ENCODE measurements at regions of chr19 and their contacts with region 1.

Region 1: DNA sequence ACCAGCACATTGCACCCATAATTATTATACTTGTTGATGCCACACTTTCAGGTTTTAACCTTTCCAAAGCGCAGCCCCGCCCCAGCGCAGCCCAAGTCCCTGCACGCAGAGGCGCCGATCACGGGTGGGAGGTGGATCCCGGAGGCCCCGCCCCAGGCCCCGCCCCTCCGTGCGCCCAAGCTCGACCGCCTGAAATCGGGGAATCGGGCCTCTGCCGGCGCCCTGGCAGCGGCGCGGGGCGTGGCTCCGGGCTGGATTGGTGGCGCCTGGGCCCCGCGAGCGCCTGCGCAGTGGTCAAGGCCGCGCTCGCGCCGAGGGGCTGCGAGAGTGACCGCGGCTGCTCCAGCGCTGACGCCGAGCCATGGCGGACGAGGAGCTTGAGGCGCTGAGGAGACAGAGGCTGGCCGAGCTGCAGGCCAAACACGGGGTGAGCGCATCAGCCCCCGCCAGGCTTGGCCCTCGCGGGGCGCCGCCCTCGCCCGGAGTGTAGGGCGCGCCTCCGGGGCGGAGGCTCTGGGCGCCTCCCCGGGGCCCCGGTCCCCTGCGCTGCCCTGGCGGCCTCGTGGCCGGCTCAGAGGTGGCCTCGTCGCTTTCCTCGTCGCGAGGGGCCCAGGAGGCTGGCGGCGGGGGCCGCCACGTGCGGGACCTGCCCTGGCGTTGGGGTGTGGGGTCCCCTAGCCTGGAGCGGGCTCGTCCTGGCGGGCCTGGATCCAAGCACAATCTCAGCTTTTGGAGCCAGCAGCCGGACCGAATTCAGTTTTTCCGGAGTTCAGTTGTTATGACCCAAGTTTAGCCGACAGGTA is at the start of gene PDCD5:
- DNase-seq: peak; percentile 88 to 96 (median 93)
- ATAC-seq: peak; percentile 98
- H3K4me3 ChIP-seq: peak within 1 kb of the TSS; percentile 91
- H3K4me3 Mint-ChIP-seq: peak within 1 kb of the TSS; percentile 89 to 99 (median 94)
- H3K27ac ChIP-seq: peak within 1 kb of the TSS; percentile 77
- H3K27ac Mint-ChIP-seq: peak within 1 kb of the TSS; percentile 75 to 95 (median 90)
- H3K4me1 ChIP-seq: peaks cover 13 to 19% of the 10 kb centered on the region in 2 donors
- H3K4me1 Mint-ChIP-seq: peaks cover 10 to 46% (median 36%) of the 10 kb centered on the region in 7 donors
- H3K27me3 ChIP-seq: no peaks in the 10 kb centered on the region
- H3K27me3 Mint-ChIP-seq: peaks cover 0 to 20% (median 0%) of the 10 kb centered on the region in 5 donors
- total RNA-seq, gene PDCD5: 19.5 to 98.0 (median 51.2) TPM

Region 2: DNA sequence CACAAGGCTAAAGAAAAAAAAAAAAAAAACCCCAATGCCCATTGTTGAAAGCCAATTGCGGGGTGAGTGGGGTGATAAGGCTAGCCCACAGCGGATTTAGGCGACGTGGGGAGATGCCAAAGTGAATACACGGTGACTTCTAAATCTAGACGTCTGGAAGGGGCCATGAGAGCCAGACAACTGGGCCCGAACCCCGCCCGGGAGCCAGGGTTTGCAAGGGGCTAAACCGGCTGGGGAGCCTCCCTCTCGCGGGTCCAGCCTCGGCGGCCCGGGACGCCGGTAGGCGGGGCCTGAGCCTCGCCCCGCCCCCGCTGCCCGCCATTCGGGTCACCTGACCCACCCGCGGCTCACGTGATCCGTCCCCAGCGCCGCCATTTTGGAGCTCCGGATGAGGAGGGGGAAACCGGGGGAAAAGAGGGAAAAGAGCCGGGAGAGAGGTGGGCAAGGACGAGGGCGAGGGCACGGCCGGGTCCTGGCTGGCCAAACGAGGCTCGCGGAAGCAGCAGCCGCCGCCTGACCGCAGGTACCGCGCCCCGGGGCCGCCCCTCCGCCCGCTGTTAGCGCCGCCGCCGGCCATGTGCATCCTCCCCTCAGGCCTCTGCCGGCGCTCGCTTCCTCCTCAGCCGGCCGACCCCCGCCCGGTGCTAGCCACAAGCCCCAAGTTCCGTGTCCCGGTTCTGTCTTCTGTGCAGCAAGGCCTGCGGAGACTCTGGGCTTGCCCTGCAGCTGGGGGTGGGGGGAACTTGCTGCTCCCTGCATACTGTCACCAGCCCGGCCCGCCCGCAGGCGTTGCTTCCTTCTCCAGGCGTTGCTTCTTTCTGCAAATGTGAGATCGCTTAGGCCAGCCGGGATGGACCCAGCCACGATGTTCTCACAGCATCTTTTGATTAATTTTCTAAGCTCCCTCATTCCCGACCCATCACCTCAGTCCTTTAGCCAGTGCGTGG is 235.6 kb before region 1 on chr19 and contains the start of gene ZNF507:
- CTCF ChIA-PET with region 1: no interaction called
- POLR2A ChIA-PET with region 1: interaction called, 5 read pairs
- intact Hi-C with region 1: loop called (anchors 1 kb)
- DNase-seq: peak; percentile 69 to 90 (median 77)
- ATAC-seq: peak; percentile 93
- H3K4me3 ChIP-seq: peak within 1 kb of the TSS; percentile 71
- H3K4me3 Mint-ChIP-seq: peak within 1 kb of the TSS; percentile 95 to 99 (median 97)
- H3K27ac ChIP-seq: peak within 1 kb of the TSS; percentile 89
- H3K27ac Mint-ChIP-seq: peak within 1 kb of the TSS; percentile 88 to 99 (median 95)
- H3K4me1 ChIP-seq: peaks cover 27 to 30% of the 10 kb centered on the region in 2 donors
- H3K4me1 Mint-ChIP-seq: peaks cover 30 to 47% (median 43%) of the 10 kb centered on the region in 7 donors
- H3K27me3 ChIP-seq: no peaks in the 10 kb centered on the region
- H3K27me3 Mint-ChIP-seq: peaks cover 0 to 18% (median 5%) of the 10 kb centered on the region in 5 donors
- total RNA-seq, gene ZNF507: 21.6 to 46.3 (median 36.4) TPM

Region 3: DNA sequence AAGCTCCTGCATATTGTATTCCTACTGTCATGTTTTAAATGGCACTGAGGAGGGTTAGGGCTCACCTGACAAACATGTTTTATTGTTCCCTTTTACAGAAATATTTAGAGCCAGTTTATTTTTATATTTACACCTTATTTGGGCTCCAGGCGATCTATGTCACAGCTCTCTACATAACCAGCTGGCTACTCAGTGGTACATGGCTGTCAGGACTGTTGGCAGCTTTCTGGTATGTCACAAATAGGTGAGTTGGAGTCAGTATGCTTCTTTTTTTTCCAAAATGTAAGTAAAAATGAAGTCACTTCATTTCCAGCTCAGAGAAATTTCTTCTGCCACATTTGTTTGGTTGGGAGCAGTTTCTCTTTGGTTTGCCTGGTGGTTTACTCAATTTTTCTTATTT is 144.0 kb before region 1 on chr19:
- CTCF ChIA-PET with region 1: no interaction called
- POLR2A ChIA-PET with region 1: no interaction called
- intact Hi-C with region 1: no loop called
- DNase-seq: no peak
- ATAC-seq: no peak
- H3K4me3 ChIP-seq: no peak overlapping the region
- H3K4me3 Mint-ChIP-seq: no peak overlapping the region
- H3K27ac ChIP-seq: no peak overlapping the region
- H3K27ac Mint-ChIP-seq: no peak overlapping the region
- H3K4me1 ChIP-seq: no peaks in the 10 kb centered on the region
- H3K4me1 Mint-ChIP-seq: no peaks in the 10 kb centered on the region
- H3K27me3 ChIP-seq: no peaks in the 10 kb centered on the region
- H3K27me3 Mint-ChIP-seq: no peaks in the 10 kb centered on the region

Region 4: DNA sequence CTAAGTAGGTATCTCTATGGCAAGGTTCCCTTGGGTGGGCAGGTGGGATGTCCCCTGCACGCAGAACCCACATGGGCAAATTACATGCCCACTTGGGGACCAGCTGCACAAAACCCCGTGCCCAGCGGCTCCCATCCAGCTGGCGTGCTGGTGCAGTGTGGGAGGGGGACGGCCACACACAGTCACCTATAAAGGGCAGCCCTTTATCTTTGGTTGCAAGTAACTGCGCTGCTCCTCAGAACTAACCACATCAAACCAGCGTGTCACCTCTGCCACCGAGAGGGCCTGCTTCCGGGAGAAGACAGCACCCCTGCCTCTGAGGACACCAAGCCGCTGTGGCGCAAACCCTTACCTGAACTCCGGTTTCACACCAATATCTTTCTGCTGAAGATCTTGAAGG is 61.7 kb after region 1 on chr19:
- CTCF ChIA-PET with region 1: no interaction called
- POLR2A ChIA-PET with region 1: no interaction called
- intact Hi-C with region 1: loop called in 1 of 2 experiments (anchors 2 kb)
- DNase-seq: peak in 8 of 9 donors; percentile 46 to 76 (median 62)
- ATAC-seq: peak; percentile 97
- H3K4me3 ChIP-seq: peak overlapping the region; percentile 44
- H3K4me3 Mint-ChIP-seq: peak overlapping the region; percentile 42 to 80 (median 66)
- H3K27ac ChIP-seq: no peak overlapping the region
- H3K27ac Mint-ChIP-seq: peak overlapping the region; percentile 34 to 90 (median 63)
- H3K4me1 ChIP-seq: peaks cover 20 to 26% of the 10 kb centered on the region in 2 donors
- H3K4me1 Mint-ChIP-seq: peaks cover 9 to 36% (median 27%) of the 10 kb centered on the region in 7 donors
- H3K27me3 ChIP-seq: no peaks in the 10 kb centered on the region
- H3K27me3 Mint-ChIP-seq: no peaks in the 10 kb centered on the region

Region 5: GRCh38 chr19:32652894-32653602 is 71.9 kb after region 1 on chr19:
- CTCF ChIA-PET with region 1: no interaction called
- POLR2A ChIA-PET with region 1: no interaction called
- intact Hi-C with region 1: no loop called
- DNase-seq: no peak
- ATAC-seq: no peak
- H3K4me3 ChIP-seq: no peak overlapping the region
- H3K4me3 Mint-ChIP-seq: no peak overlapping the region
- H3K27ac ChIP-seq: no peak overlapping the region
- H3K27ac Mint-ChIP-seq: peak overlapping the region in 1 of 9 donors; percentile 34
- H3K4me1 ChIP-seq: no peaks in the 10 kb centered on the region
- H3K4me1 Mint-ChIP-seq: no peaks in the 10 kb centered on the region
- H3K27me3 ChIP-seq: no peaks in the 10 kb centered on the region
- H3K27me3 Mint-ChIP-seq: no peaks in the 10 kb centered on the region

Region 6: DNA sequence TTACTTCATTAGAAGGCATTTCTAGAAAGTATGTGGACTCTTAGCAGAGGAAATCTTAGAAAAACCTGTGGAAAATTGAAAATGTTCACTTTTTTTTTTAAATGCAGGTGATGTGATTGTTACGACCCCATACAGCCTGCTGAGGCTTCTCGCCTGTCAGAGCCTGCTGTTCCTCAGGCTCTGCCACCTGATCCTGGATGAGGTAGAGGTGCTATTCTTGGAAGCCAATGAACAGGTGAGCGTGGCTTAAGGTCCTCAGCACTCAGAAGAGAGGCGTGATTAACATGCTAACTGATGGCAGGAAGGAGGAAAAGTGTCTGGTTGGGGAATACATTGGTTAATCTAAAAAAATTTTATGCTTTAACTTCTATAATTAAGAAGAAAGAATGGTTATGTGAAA is 217.1 kb after region 1 on chr19:
- CTCF ChIA-PET with region 1: no interaction called
- POLR2A ChIA-PET with region 1: no interaction called
- intact Hi-C with region 1: loop called (anchors 5 to 10 kb)
- DNase-seq: no peak
- ATAC-seq: no peak
- H3K4me3 ChIP-seq: no peak overlapping the region
- H3K4me3 Mint-ChIP-seq: no peak overlapping the region
- H3K27ac ChIP-seq: no peak overlapping the region
- H3K27ac Mint-ChIP-seq: peak overlapping the region in 1 of 9 donors; percentile 10
- H3K4me1 ChIP-seq: peaks cover 21 to 42% of the 10 kb centered on the region in 2 donors
- H3K4me1 Mint-ChIP-seq: peaks cover 26 to 82% (median 69%) of the 10 kb centered on the region in 7 donors
- H3K27me3 ChIP-seq: no peaks in the 10 kb centered on the region
- H3K27me3 Mint-ChIP-seq: peaks cover 0 to 5% (median 0%) of the 10 kb centered on the region in 5 donors

Region 7: GRCh38 chr19:33132425-33132824 is 551.3 kb after region 1 on chr19:
- CTCF ChIA-PET with region 1: no interaction called
- POLR2A ChIA-PET with region 1: no interaction called
- intact Hi-C with region 1: loop called in 1 of 2 experiments (anchors 5 kb)
- DNase-seq: no peak
- ATAC-seq: no peak
- H3K4me3 ChIP-seq: no peak overlapping the region
- H3K4me3 Mint-ChIP-seq: no peak overlapping the region
- H3K27ac ChIP-seq: no peak overlapping the region
- H3K27ac Mint-ChIP-seq: peak overlapping the region in 2 of 9 donors; percentile 38 to 69
- H3K4me1 ChIP-seq: no peaks in the 10 kb centered on the region
- H3K4me1 Mint-ChIP-seq: peaks cover 0 to 8% (median 6%) of the 10 kb centered on the region in 7 donors
- H3K27me3 ChIP-seq: no peaks in the 10 kb centered on the region
- H3K27me3 Mint-ChIP-seq: no peaks in the 10 kb centered on the region

Measured in naive thymus-derived CD4-positive, alpha-beta T cell (primary cell).